H1 (cell line): ENCODE measurements at regions of chr12 and their contacts with region 1.

Region 1: DNA sequence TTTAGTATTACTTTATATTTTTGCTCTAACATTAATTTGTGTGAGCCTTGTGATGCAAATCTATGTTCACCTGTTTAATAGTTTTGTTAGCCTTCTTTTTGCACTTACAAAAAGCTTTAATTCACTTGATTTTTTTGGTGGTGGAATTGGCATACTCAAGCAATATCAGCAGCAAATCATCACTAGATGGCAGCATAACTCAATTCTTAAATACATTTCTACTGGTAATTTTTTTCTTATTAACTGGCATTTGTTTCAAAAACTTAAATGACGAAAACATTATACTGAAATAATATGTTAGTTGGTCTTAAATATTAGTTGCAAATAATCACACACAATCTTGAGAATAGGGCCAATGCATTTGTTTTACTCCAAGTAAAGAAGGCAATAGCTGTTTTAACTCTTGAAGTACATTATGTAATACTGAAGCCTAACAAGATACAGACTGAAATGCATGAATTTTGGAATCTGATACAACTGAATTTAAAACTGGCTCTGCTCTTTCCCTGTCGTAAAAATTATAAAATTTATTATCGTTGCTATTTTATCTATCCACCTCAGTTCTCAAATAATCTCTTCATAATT is 151.5 kb downstream of the ATXN7L3B start:
- DNase-seq: no peak
- H3K4me3 ChIP-seq: no peak overlapping the region
- H3K27ac ChIP-seq: no peak overlapping the region
- H3K4me1 ChIP-seq: no peaks in the 10 kb centered on the region
- H3K27me3 ChIP-seq: no peaks in the 10 kb centered on the region
- CTCF ChIP-seq: peak in 2 of 3 experiments; percentile 8 to 46; a peak in 2 of 4 replicates
- EP300 ChIP-seq: no peak
- POLR2A ChIP-seq: no peak
- RAD21 ChIP-seq: peak; percentile 58 to 63

Region 2: GRCh38 chr12:74626397-74626796 is 62.8 kb before region 1 on chr12:
- CTCF ChIA-PET with region 1: no interaction called
- POLR2A ChIA-PET with region 1: no interaction called
- DNase-seq: no peak
- H3K4me3 ChIP-seq: no peak overlapping the region
- H3K27ac ChIP-seq: no peak overlapping the region
- H3K4me1 ChIP-seq: no peaks in the 10 kb centered on the region
- H3K27me3 ChIP-seq: no peaks in the 10 kb centered on the region
- CTCF ChIP-seq: no peak
- EP300 ChIP-seq: no peak
- POLR2A ChIP-seq: no peak
- RAD21 ChIP-seq: no peak

Region 3: DNA sequence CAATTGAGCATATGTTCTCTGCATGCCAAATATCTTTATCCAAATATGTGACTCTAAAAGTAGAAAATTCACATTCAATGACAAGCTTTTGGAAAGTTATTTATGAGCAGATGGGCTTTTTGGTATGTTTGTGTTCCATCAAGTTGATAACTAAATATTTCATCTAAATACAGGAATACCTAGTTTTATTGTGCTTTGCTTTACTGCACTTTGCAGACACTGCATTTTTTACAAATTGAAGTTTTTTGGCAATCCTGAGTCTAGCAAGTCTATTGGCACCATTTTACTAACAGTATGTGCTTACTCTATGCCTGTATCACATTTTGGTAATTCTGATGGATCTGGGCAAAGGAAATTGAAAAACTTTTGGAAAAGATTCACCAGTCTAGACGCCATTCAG is 17.7 kb before region 1 on chr12:
- CTCF ChIA-PET with region 1: interaction called, 10 read pairs
- POLR2A ChIA-PET with region 1: no interaction called
- DNase-seq: no peak
- H3K4me3 ChIP-seq: no peak overlapping the region
- H3K27ac ChIP-seq: no peak overlapping the region
- H3K4me1 ChIP-seq: no peaks in the 10 kb centered on the region
- H3K27me3 ChIP-seq: no peaks in the 10 kb centered on the region
- CTCF ChIP-seq: no peak
- EP300 ChIP-seq: no peak
- POLR2A ChIP-seq: no peak
- RAD21 ChIP-seq: no peak